Mammary epithelial cell (primary cell): ENCODE measurements at regions of chr14 and their contacts with region 1.

Region 1: DNA sequence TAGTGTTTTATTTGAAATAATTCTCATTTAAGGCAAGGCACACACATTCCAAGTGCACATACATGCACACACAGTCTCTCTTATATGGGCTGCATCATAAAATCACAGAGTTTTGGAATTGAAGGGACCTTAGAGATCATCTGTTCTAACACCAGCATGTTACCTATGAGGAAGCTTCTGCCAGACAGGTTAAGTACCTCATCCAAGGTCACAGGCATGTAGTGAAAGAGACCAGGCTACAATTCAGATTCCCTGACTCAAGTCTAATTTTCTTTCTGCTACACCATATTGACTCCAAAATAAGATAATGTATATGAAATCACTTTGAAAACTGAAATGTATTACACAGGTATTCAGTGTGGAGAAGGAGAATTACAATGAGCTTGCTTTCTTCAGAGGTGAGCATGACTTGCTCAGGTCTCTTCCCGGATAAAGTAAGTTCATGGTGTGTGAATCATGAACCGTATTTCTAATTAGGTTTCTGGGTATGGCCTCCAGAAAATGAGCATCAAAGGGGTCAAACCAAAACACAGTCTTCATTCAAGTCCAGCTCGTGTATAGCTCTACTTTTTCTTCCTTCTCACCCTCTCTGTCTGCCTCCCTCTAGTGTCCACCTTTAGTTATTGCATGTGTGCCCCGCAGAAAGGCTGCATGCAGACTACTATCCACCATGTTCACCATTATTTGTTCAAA is 411.9 kb downstream of the FUT8 start:
- DNase-seq: peak; percentile 42
- H3K4me3 ChIP-seq: no peak overlapping the region
- H3K27ac ChIP-seq: no peak overlapping the region
- H3K4me1 ChIP-seq: no peaks in the 10 kb centered on the region
- H3K27me3 ChIP-seq: peaks cover 7% of the 10 kb centered on the region
- CTCF ChIP-seq: peak; percentile 91 to 98

Region 2: GRCh38 chr14:65170768-65171507 is 653.5 kb before region 1 on chr14:
- CTCF ChIA-PET with region 1: no interaction called
- dilution Hi-C with region 1: loop called (anchors 5 kb)
- in situ Hi-C with region 1: loop called (anchors 10 to 25 kb)
- intact Hi-C with region 1: no loop called
- DNase-seq: peak; percentile 76
- H3K4me3 ChIP-seq: no peak overlapping the region
- H3K27ac ChIP-seq: no peak overlapping the region
- H3K4me1 ChIP-seq: peaks cover 6% of the 10 kb centered on the region
- H3K27me3 ChIP-seq: no peaks in the 10 kb centered on the region
- CTCF ChIP-seq: peak in 1 of 2 donors; percentile 16

Region 3: GRCh38 chr14:65421201-65421981 is 403.0 kb before region 1 on chr14:
- CTCF ChIA-PET with region 1: no interaction called
- dilution Hi-C with region 1: no loop called
- in situ Hi-C with region 1: loop called (anchors 5 to 10 kb)
- intact Hi-C with region 1: no loop called
- DNase-seq: peak; percentile 40
- H3K4me3 ChIP-seq: no peak overlapping the region
- H3K27ac ChIP-seq: no peak overlapping the region
- H3K4me1 ChIP-seq: no peaks in the 10 kb centered on the region
- H3K27me3 ChIP-seq: no peaks in the 10 kb centered on the region
- CTCF ChIP-seq: no peak

Region 4: GRCh38 chr14:65958664-65959562 is 134.5 kb after region 1 on chr14:
- CTCF ChIA-PET with region 1: no interaction called
- dilution Hi-C with region 1: no loop called
- in situ Hi-C with region 1: no loop called
- intact Hi-C with region 1: loop called (anchors 10 kb)
- DNase-seq: no peak
- H3K4me3 ChIP-seq: no peak overlapping the region
- H3K27ac ChIP-seq: no peak overlapping the region
- H3K4me1 ChIP-seq: no peaks in the 10 kb centered on the region
- H3K27me3 ChIP-seq: no peaks in the 10 kb centered on the region
- CTCF ChIP-seq: peak; percentile 27 to 54